Activated naive CD4-positive, alpha-beta T cell treated with anti-CD3 and anti-CD28 coated beads for 36 hours (primary cell): ENCODE measurements at regions of chr16 and their contacts with region 1.

Region 1: GRCh38 chr16:66872943-66873684 is 7.2 kb upstream of the PDP2 start:
- DNase-seq: peak; percentile 93
- H3K4me3 Mint-ChIP-seq: peak overlapping the region; percentile 62
- H3K27ac Mint-ChIP-seq: peak overlapping the region; percentile 81
- H3K4me1 Mint-ChIP-seq: peaks cover 38% of the 10 kb centered on the region
- H3K27me3 Mint-ChIP-seq: no peaks in the 10 kb centered on the region

Region 2: DNA sequence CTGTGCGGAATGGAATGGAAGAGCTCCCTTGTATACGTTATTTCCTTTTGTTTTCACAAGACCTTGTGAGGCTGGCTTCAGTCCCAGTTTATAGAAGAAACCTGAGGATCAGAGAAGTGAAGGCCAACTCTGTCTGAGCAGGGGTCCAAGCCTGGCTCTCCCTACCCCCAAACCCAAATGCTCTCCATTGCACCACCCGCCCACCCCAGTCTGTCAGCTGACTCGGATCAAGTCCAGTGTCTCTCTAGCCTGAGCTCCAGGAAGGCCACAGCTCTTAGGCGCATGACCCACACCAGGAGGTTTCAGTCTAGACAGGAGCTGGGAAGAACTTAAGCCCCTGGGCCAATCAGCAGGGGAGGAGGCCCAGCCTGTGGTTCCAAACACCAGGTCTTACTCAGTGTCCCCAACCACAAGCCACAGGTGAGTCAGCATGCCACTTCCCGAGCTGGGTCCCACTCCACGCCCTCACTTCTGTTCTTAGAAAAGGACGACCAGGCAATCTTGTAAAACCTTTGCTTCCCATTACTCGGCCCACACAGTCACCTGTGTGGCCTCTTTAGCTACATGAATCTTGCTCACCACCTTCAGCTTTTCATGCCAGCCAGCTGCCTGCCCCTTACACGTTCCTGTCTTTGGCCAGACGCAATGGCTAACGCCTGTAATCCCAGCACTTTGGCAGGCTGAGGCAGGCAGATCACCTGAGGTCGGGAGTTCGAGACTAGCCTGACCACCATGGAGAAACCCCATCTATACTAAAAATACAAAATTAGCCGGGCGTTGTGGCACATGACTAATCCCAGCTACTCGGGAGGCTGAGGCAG is 351.0 kb before region 1 on chr16:
- CTCF ChIA-PET with region 1: interaction called, 4 read pairs
- intact Hi-C with region 1: loop called (anchors 1 kb)
- DNase-seq: peak; percentile 98
- H3K4me3 Mint-ChIP-seq: peak overlapping the region; percentile 50
- H3K27ac Mint-ChIP-seq: peak overlapping the region; percentile 89
- H3K4me1 Mint-ChIP-seq: peaks cover 72% of the 10 kb centered on the region
- H3K27me3 Mint-ChIP-seq: no peaks in the 10 kb centered on the region

Region 3: DNA sequence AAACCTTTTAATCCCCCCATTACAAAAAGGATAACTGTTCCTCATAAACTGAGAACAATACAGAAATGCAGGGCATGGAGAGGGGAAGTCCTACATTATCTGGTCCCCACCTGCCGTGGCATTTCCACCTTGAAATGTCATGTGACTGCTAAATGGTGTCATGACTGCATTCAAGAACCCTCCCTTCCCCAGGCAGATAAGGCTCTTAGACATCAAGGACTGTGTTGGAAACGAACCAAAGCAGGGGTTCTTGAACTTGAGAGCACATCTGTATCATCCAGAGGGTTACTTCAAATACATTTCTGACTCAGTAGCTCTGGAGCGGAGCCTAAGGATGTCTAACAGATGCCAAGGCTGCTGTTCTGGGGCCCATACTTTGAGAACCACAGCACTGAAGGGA is 250.3 kb before region 1 on chr16:
- CTCF ChIA-PET with region 1: no interaction called
- intact Hi-C with region 1: no loop called
- DNase-seq: no peak
- H3K4me3 Mint-ChIP-seq: no peak overlapping the region
- H3K27ac Mint-ChIP-seq: no peak overlapping the region
- H3K4me1 Mint-ChIP-seq: peaks cover 2% of the 10 kb centered on the region
- H3K27me3 Mint-ChIP-seq: no peaks in the 10 kb centered on the region

Region 4: DNA sequence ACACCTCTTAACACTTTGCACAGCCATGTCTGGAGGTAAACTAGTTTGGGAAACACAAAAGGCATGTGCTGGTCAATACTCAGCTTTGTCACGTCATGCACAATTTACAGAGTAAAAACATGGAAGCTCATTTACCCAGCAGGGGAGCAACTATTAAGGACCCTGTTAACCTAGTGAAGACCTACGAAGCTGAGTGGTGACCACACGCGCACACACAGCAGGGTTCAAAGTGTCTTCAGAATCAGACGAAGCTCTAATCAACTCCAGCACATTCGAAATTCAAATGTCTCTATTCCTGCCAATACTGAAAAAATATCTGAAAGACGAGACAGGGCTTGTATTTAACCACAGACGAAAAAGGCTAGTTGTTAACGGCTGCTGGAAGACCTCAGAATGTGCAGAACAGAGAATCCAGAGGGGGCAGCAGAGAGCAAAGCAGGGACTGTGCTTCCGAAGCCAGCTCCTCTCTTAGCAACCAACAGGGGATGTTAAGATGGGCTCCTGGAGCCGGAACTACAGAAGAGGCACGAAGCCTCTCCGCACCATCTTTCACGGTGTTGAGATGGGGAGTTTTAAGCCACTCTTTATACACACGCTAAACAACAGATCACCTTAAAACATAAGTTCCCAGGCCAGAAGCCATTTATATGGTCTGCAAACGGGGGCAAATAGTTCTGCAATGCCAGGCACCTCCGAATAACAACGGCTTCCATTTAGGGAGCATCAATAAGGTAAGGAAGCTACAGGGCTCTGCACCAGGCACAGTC is 222.2 kb before region 1 on chr16:
- CTCF ChIA-PET with region 1: interaction called, 12 read pairs
- intact Hi-C with region 1: loop called (anchors 2 kb)
- DNase-seq: peak; percentile 93
- H3K4me3 Mint-ChIP-seq: peak overlapping the region; percentile 68
- H3K27ac Mint-ChIP-seq: no peak overlapping the region
- H3K4me1 Mint-ChIP-seq: peaks cover 13% of the 10 kb centered on the region
- H3K27me3 Mint-ChIP-seq: no peaks in the 10 kb centered on the region

Region 5: DNA sequence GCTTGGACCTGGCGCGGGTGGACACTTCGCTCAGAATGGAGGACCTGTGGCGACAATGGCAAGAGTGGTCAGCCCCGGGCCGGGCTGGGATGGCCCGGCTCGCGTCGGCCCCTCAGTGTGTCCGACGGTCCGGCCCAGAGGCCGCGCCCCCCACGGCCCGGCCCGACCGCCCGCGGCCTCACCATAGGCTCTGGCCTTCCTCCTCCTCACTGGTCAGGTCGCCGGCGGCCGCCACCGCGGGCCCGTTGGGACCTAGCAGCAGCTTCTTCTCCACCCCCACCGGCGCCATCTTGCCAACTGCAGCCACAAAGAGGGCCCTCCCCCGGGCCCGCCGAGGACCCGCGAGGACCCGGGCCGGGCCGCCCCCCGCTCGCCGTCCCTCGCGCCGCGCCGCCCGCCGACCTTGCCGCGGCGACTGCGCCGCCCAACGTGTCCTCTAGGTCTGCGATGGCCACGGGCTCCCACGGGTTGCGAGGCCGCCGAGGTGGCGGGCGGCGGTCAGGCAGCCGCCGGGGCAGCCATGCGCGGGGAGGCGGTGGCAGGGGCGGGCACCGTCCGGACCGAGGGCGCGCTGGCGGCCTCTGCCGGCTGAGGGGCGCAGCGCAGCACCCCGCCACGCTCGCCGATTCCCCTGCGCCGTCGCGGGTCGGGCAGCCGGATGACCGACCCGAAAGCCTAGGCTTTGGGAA is 121.7 kb before region 1 on chr16 and contains the start of gene DYNC1LI2:
- CTCF ChIA-PET with region 1: interaction called, 10 read pairs
- intact Hi-C with region 1: loop called (anchors 1 kb)
- DNase-seq: peak; percentile 82
- H3K4me3 Mint-ChIP-seq: peak within 1 kb of the TSS; percentile 88
- H3K27ac Mint-ChIP-seq: peak within 1 kb of the TSS; percentile 78
- H3K4me1 Mint-ChIP-seq: peaks cover 36% of the 10 kb centered on the region
- H3K27me3 Mint-ChIP-seq: peaks cover 3% of the 10 kb centered on the region
- total RNA-seq, gene DYNC1LI2: 30.8 to 31.0 TPM

Region 6: DNA sequence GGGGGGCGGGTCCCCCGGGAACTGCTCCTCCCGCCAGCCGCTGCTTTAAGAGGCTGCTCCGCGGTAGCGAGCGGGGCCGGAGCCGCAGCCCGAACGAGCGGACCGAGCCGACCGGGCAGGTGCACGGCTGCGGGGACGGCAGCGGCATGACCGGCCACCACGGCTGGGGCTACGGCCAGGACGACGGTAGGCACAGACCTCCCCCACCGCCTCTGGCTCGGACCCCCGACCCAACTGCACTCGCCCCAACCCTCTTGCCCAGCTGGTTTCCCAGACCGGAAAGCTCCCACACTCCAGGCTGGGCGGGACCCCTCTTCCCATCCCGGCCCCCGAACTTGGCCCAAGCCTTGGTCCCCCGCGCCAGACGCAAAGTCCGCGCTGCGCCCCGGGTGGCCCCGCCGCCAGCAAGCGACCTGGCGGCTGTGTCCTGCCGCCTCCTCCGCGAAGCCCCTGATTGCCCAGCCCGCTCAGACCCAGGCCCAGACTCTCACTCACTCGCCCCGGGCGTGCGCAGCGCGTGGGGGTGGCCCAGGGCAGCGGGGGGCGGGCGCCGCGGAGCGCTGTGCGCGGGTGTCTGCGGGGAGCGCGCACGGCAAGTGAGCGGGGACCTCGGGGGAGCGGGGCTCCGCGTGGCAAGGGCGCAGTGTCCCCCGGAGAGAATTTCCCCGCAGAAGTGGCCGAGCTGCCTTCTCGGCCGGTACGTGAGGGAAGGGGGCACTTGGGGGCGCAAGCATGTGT is 28.6 kb before region 1 on chr16 and contains the start of gene CA7:
- CTCF ChIA-PET with region 1: interaction called, 25 read pairs
- intact Hi-C with region 1: no loop called
- DNase-seq: no peak
- H3K4me3 Mint-ChIP-seq: peak within 1 kb of the TSS; percentile 39
- H3K27ac Mint-ChIP-seq: no peak within 1 kb of the TSS
- H3K4me1 Mint-ChIP-seq: peaks cover 5% of the 10 kb centered on the region
- H3K27me3 Mint-ChIP-seq: peaks cover 32% of the 10 kb centered on the region
- total RNA-seq, gene CA7: not detected

Region 7: DNA sequence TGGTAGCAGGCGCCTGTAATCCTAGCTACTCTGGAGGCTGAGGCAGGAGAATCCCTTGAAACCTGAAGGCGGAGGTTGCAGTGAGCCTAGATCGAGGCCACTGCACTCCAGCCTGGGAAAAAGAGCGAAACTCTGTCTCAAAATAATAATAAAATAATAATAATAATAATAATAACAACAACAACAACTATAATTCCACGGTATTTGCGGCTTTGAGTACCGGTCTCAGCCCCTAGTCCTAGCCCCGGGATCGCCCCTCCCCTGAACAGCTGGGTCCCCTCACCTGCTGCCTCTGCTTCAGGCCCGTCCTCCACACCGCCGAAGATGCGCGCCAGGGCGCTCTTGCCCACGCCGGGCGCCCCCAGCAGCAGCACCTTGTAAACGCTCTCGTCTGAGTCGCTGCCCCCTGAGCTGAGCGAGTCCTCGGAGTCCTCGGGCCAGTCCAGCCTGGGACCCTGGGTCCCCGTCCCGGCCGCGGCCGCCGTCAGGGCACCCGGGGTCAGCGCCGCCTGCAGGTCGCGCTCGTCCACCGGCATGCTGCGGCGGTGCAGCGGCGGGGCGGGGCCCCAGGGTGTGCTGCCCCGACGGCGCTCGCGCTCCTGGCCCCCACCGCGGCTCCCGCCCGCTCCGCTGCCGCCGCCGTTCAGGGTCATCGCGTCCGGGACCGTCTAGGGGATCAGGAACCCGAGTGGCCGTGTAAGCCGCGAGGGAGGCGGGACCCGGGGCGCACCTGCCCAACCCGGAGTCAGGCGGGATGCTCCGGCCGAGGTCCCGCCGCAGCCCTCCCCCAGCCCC is 51.6 kb after region 1 on chr16:
- CTCF ChIA-PET with region 1: interaction called, 11 read pairs
- intact Hi-C with region 1: no loop called
- DNase-seq: peak; percentile 42
- H3K4me3 Mint-ChIP-seq: peak overlapping the region; percentile 66
- H3K27ac Mint-ChIP-seq: no peak overlapping the region
- H3K4me1 Mint-ChIP-seq: peaks cover 10% of the 10 kb centered on the region
- H3K27me3 Mint-ChIP-seq: peaks cover 24% of the 10 kb centered on the region